ENCODE measurements at regions of chr10 and their contacts with region 1.

Region 1: DNA sequence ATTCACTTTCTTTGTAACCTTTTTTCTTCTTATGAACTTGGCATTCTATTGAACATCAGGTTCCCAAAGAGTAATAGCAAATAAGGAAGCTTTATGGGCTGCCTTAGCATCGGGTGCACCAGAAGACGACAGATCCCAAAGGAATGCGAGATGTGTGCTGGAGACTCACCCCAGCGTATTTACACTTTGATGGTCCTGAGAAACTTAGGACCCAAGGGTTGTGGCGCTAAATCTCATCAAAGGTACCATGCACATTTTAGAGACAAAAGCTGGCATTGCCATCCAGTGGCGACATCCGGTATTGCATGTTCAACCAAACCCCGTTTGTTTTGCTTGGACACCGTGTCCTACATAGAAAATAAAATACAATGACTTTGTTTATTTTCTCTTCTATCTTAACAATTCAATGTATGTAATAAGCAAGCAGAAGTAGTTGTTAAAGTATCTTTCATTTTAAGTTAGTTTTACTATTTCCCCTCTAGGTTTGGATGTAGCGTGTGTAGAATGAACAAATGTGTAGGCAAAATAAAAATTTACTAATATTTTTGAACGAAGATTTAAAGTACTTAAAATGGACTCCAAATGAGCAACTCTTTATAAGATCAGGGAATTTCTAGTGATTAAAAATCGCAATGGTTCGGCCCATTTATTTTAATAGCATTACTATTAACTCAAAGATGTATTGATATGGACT is 1154.8 kb downstream of the GATA3 start:
- DNase-seq: peak; percentile 52
- CTCF ChIP-seq: peak; percentile 86

Region 2: DNA sequence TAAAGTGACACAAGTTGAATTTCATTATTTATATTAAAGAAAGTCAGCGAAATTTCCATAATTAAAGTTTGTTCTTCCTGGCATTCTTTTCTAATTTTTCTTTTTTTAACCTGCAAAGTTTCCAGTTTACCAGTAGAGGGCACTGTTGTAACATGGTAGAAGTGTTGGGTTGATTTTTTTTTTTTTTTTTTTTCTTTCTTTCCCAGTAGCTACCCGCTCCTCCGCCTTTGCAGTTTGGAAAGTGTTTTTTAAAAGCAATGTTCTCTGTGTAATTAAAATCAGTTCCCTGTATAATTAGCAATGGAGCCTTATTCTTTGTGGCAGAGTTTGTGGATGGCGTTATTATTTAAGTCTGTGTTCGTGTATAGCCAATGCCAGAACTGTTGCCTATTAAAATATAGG is 1337.2 kb before region 1 on chr10:
- in situ Hi-C with region 1: loop called (anchors 25 kb)
- DNase-seq: no peak
- CTCF ChIP-seq: peak; percentile 52

Region 3: GRCh38 chr10:8053446-8054290 is 1155.6 kb before region 1 on chr10:
- in situ Hi-C with region 1: loop called (anchors 10 kb)
- DNase-seq: peak; percentile 97
- CTCF ChIP-seq: peak; percentile 97

Region 4: DNA sequence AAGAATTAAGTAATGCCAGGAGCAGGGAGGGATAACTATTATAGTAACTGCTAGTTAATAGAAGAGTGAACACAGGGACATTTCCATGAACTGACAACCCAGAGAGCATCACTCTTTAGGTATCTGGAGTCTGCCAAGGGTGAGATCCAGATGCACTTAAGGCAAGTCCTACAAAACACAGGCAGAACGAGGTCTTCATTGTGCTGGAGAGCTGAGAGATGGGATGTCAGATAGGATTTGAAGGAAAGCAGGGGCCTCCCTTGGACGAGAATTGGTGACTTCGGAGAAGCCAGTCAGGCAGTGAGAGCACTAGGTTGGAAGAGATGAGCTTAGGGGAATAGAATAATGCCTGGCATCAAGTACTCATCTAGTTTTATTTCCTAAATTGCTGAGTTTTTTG is 470.3 kb before region 1 on chr10:
- in situ Hi-C with region 1: no loop called
- DNase-seq: no peak
- CTCF ChIP-seq: no peak

Measured in GM13976 (cell line).